Right ventricle myocardium inferior (tissue), 1 donor: ENCODE measurements at regions of chr3 and their contacts with region 1.

Region 1: DNA sequence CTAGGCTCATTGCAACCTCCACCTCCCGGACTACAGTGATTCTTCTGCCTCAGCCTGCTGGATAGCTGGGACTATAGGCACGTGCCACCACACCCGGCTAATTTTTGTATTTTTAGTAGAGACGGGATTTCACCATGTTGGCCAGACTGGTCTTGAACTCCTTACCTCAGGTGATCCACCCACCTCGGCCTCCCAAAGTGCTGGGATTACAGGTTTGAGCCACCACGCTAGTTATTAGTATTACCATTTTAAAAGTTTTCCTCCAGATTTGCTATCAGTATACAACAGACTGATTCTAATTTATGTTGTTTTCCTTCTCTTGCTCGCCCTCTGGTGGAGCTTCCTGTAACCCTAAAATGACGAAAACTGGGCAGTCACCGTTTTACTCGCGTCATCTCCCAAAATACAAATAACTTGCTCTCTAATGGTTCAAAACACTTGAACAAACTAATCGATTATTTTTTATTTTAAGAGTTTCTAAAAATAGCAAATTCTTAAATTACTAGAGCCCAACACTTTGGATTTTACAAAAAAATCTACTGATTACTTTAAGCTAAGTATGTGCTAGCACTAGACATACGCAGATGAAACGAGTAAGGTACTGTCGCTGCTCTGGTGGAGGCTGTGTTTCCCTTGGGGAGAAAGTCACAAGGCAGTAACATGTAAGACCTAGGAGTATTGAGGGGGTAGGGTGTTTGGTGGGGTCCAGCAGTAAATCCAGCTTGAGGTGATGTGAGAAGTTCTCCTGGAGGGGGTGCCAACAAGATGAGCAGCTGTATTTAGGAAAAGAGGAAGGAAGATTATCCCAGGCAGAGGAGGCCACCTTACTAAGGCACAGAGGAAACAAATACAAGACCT is 203.3 kb downstream of the MBNL1 start:
- DNase-seq: peak; percentile 52
- ATAC-seq: peak; percentile 79

Region 2: DNA sequence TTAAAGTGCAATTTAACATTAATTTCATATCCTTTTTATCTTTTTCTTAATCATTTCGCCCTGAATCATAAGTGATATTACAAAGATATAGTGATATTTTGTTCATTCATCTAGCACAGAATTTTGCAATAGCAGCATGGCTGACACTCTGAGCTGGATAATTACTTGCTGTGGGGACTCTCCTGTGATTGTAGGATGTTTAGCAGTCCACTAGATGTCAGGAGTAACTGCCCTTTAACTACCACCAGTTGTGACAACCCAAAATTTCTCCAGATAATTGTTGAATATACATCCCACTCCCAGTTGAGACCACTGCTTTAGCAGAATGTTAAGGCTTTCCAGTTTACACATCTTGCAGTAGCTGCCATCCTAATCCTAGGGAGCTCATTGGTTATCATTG is 400.1 kb before region 1 on chr3:
- intact Hi-C with region 1: loop called (anchors 10 kb)
- DNase-seq: no peak
- ATAC-seq: no peak

Region 3: GRCh38 chr3:152183473-152183872 is 288.6 kb before region 1 on chr3:
- intact Hi-C with region 1: loop called (anchors 5 kb)
- DNase-seq: no peak
- ATAC-seq: peak; percentile 76

Region 4: GRCh38 chr3:152574461-152575079 is 102.5 kb after region 1 on chr3:
- intact Hi-C with region 1: loop called (anchors 2 kb)
- DNase-seq: peak; percentile 67
- ATAC-seq: peak; percentile 83